H1 (cell line): ENCODE measurements at regions of chr5 and their contacts with region 1.

Region 1: DNA sequence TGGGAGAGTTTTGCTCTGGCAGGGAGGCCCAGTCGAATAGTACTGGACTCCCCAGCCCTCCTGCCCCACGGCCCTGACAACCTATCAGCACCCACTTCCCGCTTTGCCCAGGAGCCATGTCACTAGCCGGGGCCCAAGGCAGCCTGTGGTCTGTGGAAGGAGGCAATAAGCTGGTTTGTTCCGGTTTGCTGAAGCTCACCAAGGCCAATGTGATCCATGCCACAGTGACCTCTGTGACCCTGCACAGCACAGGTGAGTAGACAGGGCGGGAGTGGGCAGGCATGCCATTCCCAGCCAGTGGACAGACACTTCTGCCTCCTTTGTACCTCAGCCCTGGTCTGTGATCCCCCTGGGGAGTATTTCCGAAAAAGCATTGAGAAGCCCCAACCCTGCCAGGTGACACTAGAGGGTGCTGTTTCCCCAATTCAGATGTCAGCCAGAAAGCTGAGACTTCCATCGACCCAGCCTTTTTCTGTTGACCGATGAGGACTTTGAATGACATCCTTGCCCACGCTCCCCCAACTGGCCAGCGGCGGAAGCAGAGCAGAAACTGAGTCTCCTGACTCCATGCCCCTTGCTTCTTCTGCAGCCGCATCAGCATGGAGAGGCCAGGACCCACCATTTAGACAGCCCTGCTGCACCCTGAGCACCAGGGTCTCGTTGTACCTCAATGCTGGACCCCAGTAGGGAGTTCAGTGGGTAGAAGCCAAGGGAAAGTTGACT is 9.6 kb downstream of the PCYOX1L start:
- DNase-seq: peak; percentile 62 to 89
- H3K4me3 ChIP-seq: no peak overlapping the region
- H3K27ac ChIP-seq: no peak overlapping the region
- H3K4me1 ChIP-seq: peaks cover 0 to 3% (median 1%) of the 10 kb centered on the region in 4 experiments; a peak in 3 of 7 replicates
- H3K27me3 ChIP-seq: no peaks in the 10 kb centered on the region
- CTCF ChIP-seq: peak; percentile 68 to 98 (median 97)
- EP300 ChIP-seq: no peak
- POLR2A ChIP-seq: no peak
- RAD21 ChIP-seq: peak; percentile 84 to 85

Region 2: DNA sequence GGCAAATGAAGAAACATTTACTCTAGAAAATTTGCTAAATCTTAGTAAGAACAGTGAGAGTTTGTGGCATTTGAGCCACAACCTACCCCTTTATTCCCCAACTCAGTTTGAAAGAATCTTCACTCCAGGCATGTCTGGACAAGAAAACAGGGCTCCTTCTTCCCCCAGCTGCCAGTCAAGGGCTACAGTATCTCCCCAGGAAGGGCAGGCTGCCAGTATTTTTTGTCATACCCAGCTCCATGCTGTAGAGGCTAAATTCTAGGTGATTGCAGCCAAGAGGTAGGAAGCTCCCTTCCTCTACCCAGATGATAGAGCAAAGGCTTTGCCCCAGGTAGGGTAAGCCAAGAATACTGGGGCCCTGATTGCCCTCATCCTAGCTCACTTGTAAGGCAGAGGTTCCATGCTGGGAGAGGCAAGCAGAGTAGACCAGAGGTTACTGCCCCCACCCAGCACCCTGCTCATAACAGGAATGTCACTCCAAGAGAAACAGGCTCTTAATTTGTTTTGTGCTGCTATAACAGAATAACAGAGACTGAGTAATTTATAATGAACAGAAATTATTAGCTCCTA is 42.2 kb before region 1 on chr5:
- CTCF ChIA-PET with region 1: interaction called, 43 read pairs
- POLR2A ChIA-PET with region 1: no interaction called
- DNase-seq: no peak
- H3K4me3 ChIP-seq: no peak overlapping the region
- H3K27ac ChIP-seq: no peak overlapping the region
- H3K4me1 ChIP-seq: peaks cover 0 to 4% (median 0%) of the 10 kb centered on the region in 4 experiments; a peak in 1 of 7 replicates
- H3K27me3 ChIP-seq: no peaks in the 10 kb centered on the region
- CTCF ChIP-seq: no peak
- EP300 ChIP-seq: no peak
- POLR2A ChIP-seq: no peak
- RAD21 ChIP-seq: no peak

Region 3: DNA sequence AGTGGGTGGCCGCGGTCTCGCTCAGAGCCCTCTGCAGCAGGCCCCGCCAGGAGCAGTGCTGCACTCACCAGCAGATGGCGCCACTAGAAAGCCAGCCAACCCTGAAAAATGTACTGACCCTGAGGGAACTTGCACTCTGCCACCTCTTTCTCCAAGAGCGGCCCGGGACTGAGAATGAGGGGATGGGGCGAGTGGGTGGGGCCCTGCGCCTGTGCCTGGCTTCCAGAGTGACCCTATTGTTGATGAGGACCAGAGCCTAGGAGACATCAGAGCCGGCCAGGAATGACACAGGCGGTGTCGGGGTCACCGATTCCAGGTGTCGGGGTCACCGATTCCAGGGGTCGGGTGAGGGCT is 14.6 kb after region 1 on chr5:
- CTCF ChIA-PET with region 1: interaction called, 220 read pairs
- POLR2A ChIA-PET with region 1: interaction called, 4 read pairs
- DNase-seq: peak; percentile 56 to 96
- H3K4me3 ChIP-seq: no peak overlapping the region
- H3K27ac ChIP-seq: no peak overlapping the region
- H3K4me1 ChIP-seq: no peaks in the 10 kb centered on the region; a peak in 3 of 7 replicates
- H3K27me3 ChIP-seq: no peaks in the 10 kb centered on the region
- CTCF ChIP-seq: peak; percentile 96 to 97 (median 97)
- EP300 ChIP-seq: no peak
- POLR2A ChIP-seq: no peak
- RAD21 ChIP-seq: peak; percentile 87 to 93

Region 4: GRCh38 chr5:149406203-149406978 is 39.0 kb after region 1 on chr5:
- CTCF ChIA-PET with region 1: interaction called, 19 read pairs
- POLR2A ChIA-PET with region 1: no interaction called
- DNase-seq: no peak
- H3K4me3 ChIP-seq: no peak overlapping the region
- H3K27ac ChIP-seq: no peak overlapping the region
- H3K4me1 ChIP-seq: peaks cover 0 to 10% (median 5%) of the 10 kb centered on the region in 4 experiments; a peak in 4 of 7 replicates
- H3K27me3 ChIP-seq: no peaks in the 10 kb centered on the region; a peak in 1 of 7 replicates
- CTCF ChIP-seq: peak in 1 of 3 experiments; percentile 9; a peak in 1 of 4 replicates
- EP300 ChIP-seq: no peak
- POLR2A ChIP-seq: no peak
- RAD21 ChIP-seq: no peak

Region 5: DNA sequence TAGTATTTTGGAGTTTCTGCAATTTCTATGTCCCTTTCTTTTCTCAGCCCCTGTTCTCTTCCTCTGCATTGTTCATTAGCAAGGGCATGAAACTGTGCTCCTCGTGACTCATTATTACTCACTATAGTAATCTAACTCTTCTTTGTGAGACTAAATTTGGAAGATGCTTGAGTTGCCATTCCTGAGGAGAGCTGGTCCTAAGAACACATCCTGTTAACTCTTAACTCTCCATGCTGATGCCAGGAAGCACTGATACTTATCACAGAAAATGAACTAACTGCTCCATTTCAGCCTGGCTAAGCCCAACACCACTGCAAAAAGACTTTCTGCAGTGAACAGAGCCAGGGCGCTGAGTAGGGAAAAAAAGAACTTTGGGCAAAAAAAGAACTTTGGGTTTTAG is 194.4 kb after region 1 on chr5:
- CTCF ChIA-PET with region 1: interaction called, 23 read pairs
- POLR2A ChIA-PET with region 1: no interaction called
- DNase-seq: no peak
- H3K4me3 ChIP-seq: no peak overlapping the region
- H3K27ac ChIP-seq: peak overlapping the region; percentile 51; the same call in 1 of the 2 replicates
- H3K4me1 ChIP-seq: peaks cover 5 to 12% (median 7%) of the 10 kb centered on the region in 4 experiments; a peak in 6 of 7 replicates
- H3K27me3 ChIP-seq: no peaks in the 10 kb centered on the region
- CTCF ChIP-seq: no peak
- EP300 ChIP-seq: no peak
- POLR2A ChIP-seq: no peak
- RAD21 ChIP-seq: no peak

Region 6: DNA sequence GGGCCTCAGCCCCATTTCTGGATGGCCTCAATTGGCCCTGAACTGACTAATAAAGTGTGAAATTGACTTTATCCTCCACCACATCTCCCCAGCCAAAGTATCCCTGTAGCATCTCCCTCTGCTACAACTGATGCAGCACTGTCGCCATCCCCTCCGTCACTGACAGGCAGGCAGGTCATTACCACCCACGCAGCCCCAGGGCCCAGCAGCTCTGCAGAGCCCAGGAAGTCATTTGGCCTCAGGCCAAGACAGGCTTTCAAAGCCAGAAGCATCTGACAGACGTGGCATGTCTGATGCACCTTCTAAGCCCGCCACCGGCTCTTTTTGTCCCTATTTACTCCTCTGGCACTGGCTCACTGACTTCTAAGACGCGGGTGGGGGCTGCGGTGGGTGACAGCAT is 279.2 kb after region 1 on chr5:
- CTCF ChIA-PET with region 1: no interaction called
- POLR2A ChIA-PET with region 1: no interaction called
- DNase-seq: no peak
- H3K4me3 ChIP-seq: no peak overlapping the region
- H3K27ac ChIP-seq: no peak overlapping the region
- H3K4me1 ChIP-seq: no peaks in the 10 kb centered on the region
- H3K27me3 ChIP-seq: no peaks in the 10 kb centered on the region
- CTCF ChIP-seq: no peak
- EP300 ChIP-seq: no peak
- POLR2A ChIP-seq: no peak
- RAD21 ChIP-seq: no peak